H1 (cell line): ENCODE measurements at regions of chr2 and their contacts with region 1.

Region 1: DNA sequence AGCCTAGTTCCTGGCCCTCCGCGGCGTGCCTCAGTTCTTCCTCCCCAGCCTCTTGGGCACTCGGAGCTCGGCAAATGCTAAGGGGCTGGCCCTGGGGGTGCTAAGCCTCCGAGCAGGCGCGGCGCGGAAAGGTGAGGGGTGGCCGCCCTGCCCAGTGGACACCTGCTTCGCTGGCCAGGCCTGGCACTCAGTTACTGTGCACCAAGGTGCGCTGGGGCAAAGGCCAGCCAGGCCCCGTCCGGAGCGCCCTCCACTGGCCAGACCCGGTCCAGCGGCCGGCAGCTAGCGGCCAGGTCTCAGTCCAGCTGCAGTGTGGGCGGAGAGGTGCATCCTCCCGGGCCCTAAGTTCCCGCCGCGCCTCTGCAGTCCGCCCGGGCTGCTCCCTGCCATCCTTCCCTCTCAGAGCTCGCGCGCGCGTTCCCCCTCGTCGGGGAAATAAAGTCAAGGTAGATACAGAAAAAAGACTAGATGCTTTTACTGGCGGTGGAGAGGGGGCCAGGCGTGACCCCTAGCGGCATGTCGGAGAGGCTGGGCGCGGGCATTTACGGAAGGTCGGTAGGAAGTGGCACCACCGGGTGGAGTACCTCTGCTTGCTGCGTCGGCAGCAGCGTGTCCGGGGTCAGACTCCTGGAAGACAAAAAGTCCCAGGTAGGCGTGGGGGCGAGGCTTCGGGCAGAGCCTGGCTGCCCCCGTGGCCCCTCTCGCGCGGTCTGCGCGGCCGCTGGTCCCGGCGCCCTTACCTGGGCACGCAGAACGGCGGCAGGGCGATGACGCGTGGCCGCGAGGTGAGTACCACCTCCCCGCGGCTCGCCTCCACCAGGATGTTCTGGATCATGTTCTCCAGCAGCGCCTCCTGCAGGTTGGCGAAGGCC is 9.4 kb upstream of the CRYBA2 start:
- DNase-seq: peak in 1 of 2 experiments; percentile 96
- H3K4me3 ChIP-seq: peak overlapping the region; percentile 31 to 65 (median 41)
- H3K27ac ChIP-seq: no peak overlapping the region
- H3K4me1 ChIP-seq: peaks cover 0 to 32% (median 22%) of the 10 kb centered on the region in 4 experiments; a peak in 6 of 7 replicates
- H3K27me3 ChIP-seq: peaks cover 65 to 82% (median 79%) of the 10 kb centered on the region in 4 experiments
- CTCF ChIP-seq: peak in 2 of 3 experiments; percentile 87 to 91; a peak in 3 of 4 replicates
- EP300 ChIP-seq: no peak
- POLR2A ChIP-seq: peak in 1 of 2 experiments; percentile 38; a peak in 1 of 3 replicates
- RAD21 ChIP-seq: peak; percentile 40 to 54; a peak in 3 of 4 replicates

Region 2: GRCh38 chr2:218876562-218877219 is 125.9 kb before region 1 on chr2:
- CTCF ChIA-PET with region 1: interaction called, 92 read pairs
- POLR2A ChIA-PET with region 1: interaction called, 3 read pairs
- DNase-seq: peak in 1 of 2 experiments; percentile 90
- H3K4me3 ChIP-seq: no peak overlapping the region
- H3K27ac ChIP-seq: no peak overlapping the region
- H3K4me1 ChIP-seq: peaks cover 0 to 42% (median 27%) of the 10 kb centered on the region in 4 experiments; a peak in 6 of 7 replicates
- H3K27me3 ChIP-seq: peaks cover 97 to 100% (median 99%) of the 10 kb centered on the region in 4 experiments
- CTCF ChIP-seq: peak in 2 of 3 experiments; percentile 94 to 96; a peak in 3 of 4 replicates
- EP300 ChIP-seq: no peak
- POLR2A ChIP-seq: no peak
- RAD21 ChIP-seq: peak; percentile 90 to 97

Region 3: GRCh38 chr2:219020604-219021365 is 18.2 kb after region 1 on chr2:
- CTCF ChIA-PET with region 1: interaction called, 150 read pairs
- POLR2A ChIA-PET with region 1: no interaction called
- DNase-seq: no peak
- H3K4me3 ChIP-seq: no peak overlapping the region
- H3K27ac ChIP-seq: no peak overlapping the region
- H3K4me1 ChIP-seq: no peaks in the 10 kb centered on the region
- H3K27me3 ChIP-seq: peaks cover 0 to 3% (median 0%) of the 10 kb centered on the region in 4 experiments; a peak in 3 of 7 replicates
- CTCF ChIP-seq: no peak
- EP300 ChIP-seq: no peak
- POLR2A ChIP-seq: no peak
- RAD21 ChIP-seq: no peak

Region 4: DNA sequence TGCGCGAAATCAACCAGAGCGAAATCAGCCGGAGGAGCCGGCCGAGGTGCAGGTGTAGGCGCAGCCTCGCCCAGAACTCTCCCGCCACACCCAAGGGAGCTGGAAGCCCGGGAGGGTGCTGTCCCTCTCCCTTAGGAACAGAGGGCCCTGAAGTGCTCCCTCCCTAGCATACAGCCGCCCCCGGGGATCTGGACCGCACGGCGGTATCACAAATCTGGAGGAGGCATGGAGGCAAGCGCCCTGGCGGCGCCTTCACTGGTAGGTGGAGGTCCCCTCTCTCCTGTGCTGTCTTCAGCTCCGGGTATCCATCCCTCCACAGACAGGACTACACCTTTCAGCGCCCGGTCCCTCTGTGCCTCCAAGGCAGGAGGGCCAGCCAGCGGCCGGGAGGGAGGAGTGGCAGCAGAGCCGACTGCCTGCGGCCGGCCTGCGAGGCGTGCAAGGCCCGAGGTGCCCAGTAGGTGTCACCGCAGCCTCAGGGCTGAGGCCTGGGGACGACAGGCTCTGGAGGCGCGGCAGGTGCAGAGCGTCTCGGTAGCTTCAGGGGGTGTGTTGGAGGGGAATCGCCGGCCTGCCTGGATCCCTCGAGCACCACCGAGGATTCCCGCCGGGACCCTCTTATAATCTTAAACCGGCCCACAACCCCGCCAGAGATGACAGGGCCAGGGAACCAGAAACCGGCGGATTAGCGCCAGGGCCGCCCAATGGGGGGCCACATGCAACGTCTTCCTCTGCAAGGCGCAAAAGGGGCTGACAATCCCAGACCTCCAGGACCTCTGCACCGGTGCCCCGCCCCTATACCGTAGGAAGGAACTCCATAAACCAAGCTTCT is 55.3 kb after region 1 on chr2:
- CTCF ChIA-PET with region 1: interaction called, 134 read pairs
- POLR2A ChIA-PET with region 1: no interaction called
- DNase-seq: peak; percentile 53 to 90
- H3K4me3 ChIP-seq: peak overlapping the region in 3 of 4 experiments; percentile 30 to 53 (median 38); a peak in 5 of 8 replicates
- H3K27ac ChIP-seq: no peak overlapping the region
- H3K4me1 ChIP-seq: peaks cover 0 to 27% (median 13%) of the 10 kb centered on the region in 4 experiments; a peak in 6 of 7 replicates
- H3K27me3 ChIP-seq: peaks cover 66 to 88% (median 78%) of the 10 kb centered on the region in 4 experiments
- CTCF ChIP-seq: peak in 2 of 3 experiments; percentile 94 to 97; a peak in 3 of 4 replicates
- EP300 ChIP-seq: no peak; a peak in 1 of 3 replicates
- POLR2A ChIP-seq: no peak
- RAD21 ChIP-seq: peak; percentile 96

Region 5: GRCh38 chr2:219125225-219125885 is 122.7 kb after region 1 on chr2:
- CTCF ChIA-PET with region 1: interaction called, 68 read pairs
- POLR2A ChIA-PET with region 1: no interaction called
- DNase-seq: no peak
- H3K4me3 ChIP-seq: no peak overlapping the region
- H3K27ac ChIP-seq: no peak overlapping the region
- H3K4me1 ChIP-seq: no peaks in the 10 kb centered on the region; a peak in 2 of 7 replicates
- H3K27me3 ChIP-seq: no peaks in the 10 kb centered on the region
- CTCF ChIP-seq: no peak
- EP300 ChIP-seq: no peak
- POLR2A ChIP-seq: no peak
- RAD21 ChIP-seq: no peak